ENCODE measurements at regions of chr2 and their contacts with region 1.

Region 1: GRCh38 chr2:39216346-39217191 is 27.2 kb downstream of the CDKL4 start:
- DNase-seq: no peak

Region 2: GRCh38 chr2:38653715-38654527 is 562.6 kb before region 1 on chr2:
- in situ Hi-C with region 1: no loop called
- DNase-seq: no peak

Region 3: GRCh38 chr2:39059366-39059952 is 157.1 kb before region 1 on chr2:
- in situ Hi-C with region 1: loop called (anchors 25 kb)
- DNase-seq: peak; percentile 69